GM12878 (cell line): ENCODE measurements at regions of chr7 and their contacts with region 1.

Region 1: DNA sequence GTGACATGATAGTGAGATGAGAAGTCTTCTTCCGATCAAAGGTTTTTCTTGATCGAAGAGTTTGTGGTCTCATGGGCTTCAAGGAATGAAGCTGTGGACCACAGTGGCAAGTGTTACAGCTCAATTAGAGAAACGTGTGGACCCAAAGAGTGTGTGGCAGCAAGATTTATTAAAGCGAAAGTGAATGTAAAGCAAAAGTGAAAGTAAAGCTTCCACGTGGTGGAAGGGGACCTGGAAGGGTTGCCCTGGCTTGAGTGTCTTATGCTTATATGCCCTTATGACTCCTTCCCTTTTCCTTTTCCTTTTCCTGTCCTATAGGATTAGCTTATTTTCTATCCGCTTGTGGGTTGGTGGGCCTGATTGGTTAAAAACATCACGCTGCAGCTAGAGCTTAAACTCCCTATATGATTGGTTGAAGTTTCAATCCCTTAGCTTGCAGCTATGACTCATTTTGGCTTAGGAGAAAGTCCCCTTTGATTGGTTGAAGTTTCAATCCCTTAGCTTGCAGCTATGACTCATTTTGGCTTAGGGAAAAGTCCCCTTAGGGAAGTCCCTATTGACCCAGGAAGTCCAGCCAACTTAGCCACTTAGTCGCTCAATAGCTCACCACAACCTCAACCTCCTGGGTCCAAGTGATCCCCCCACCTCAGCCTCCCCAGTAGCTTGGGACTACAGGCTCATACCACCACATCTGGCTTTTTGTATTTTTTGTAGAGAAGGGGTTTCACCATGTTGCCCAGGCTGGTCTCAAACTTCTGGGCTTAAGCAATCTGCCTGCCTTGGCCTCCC is 34.7 kb downstream of the MRPS24 start:
- DNase-seq: peak; percentile 73
- ATAC-seq: peak; percentile 81
- H3K4me3 ChIP-seq: peak overlapping the region; percentile 52
- H3K27ac ChIP-seq: peak overlapping the region; percentile 69
- H3K4me1 ChIP-seq: peaks cover 4% of the 10 kb centered on the region; the same call in 1 of the 2 replicates
- H3K27me3 ChIP-seq: no peaks in the 10 kb centered on the region
- CTCF ChIP-seq: no peak
- EP300 ChIP-seq: peak in 1 of 2 experiments; percentile 6; a peak in 1 of 4 replicates
- POLR2A ChIP-seq: no peak
- RAD21 ChIP-seq: no peak

Region 2: GRCh38 chr7:42940985-42941847 is 893.4 kb before region 1 on chr7:
- CTCF ChIA-PET with region 1: interaction called, 8 read pairs
- POLR2A ChIA-PET with region 1: no interaction called
- RAD21 ChIA-PET with region 1: interaction called, 10 read pairs
- SMC1A ChIA-PET with region 1: interaction called, 3 read pairs
- in situ Hi-C with region 1: loop called (anchors 10 kb)
- intact Hi-C with region 1: loop called (anchors 2 kb)
- DNase-seq: peak; percentile 48
- ATAC-seq: peak; percentile 66
- H3K4me3 ChIP-seq: no peak overlapping the region
- H3K27ac ChIP-seq: no peak overlapping the region
- H3K4me1 ChIP-seq: peaks cover 12% of the 10 kb centered on the region; the same call in 1 of the 2 replicates
- H3K27me3 ChIP-seq: no peaks in the 10 kb centered on the region
- CTCF ChIP-seq: peak; percentile 87 to 92 (median 91)
- EP300 ChIP-seq: no peak
- POLR2A ChIP-seq: no peak
- RAD21 ChIP-seq: peak; percentile 97

Region 3: DNA sequence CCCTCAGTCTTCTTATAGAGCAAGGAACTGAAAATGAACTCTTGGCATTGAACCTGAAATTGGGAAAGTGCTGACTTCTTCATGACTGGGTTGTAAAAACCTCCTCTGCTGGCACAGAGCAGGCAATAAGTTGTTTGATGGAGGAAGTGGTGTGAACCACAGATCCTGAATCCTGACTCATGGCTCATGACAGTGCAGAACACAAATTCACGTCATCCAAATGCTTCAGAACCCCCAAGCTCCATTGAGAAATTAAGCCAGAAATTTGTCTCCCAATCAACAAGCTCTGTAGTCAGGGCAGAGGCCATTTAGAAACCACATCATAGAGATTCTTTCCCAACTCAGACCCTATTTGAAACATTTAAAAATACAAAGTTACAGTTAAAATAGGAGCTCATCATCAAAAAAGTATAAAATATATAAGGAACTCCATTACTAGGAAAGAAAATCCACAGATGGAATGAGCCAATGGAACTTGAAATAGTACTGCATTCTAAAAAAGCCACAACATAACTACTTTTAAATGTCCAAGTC is 262.1 kb before region 1 on chr7:
- CTCF ChIA-PET with region 1: interaction called, 214 read pairs
- POLR2A ChIA-PET with region 1: interaction called, 4 read pairs
- RAD21 ChIA-PET with region 1: no interaction called
- SMC1A ChIA-PET with region 1: interaction called, 6 read pairs
- in situ Hi-C with region 1: no loop called
- intact Hi-C with region 1: no loop called
- DNase-seq: no peak
- ATAC-seq: peak; percentile 65
- H3K4me3 ChIP-seq: no peak overlapping the region
- H3K27ac ChIP-seq: peak overlapping the region; percentile 18; the same call in 1 of the 2 replicates
- H3K4me1 ChIP-seq: peaks cover 33% of the 10 kb centered on the region
- H3K27me3 ChIP-seq: no peaks in the 10 kb centered on the region
- CTCF ChIP-seq: no peak
- EP300 ChIP-seq: no peak; a peak in 1 of 4 replicates
- POLR2A ChIP-seq: no peak
- RAD21 ChIP-seq: no peak

Region 4: GRCh38 chr7:43700059-43700501 is 134.6 kb before region 1 on chr7:
- CTCF ChIA-PET with region 1: interaction called, 122 read pairs
- POLR2A ChIA-PET with region 1: interaction called, 6 read pairs
- RAD21 ChIA-PET with region 1: interaction called, 40 read pairs
- SMC1A ChIA-PET with region 1: interaction called, 50 read pairs
- in situ Hi-C with region 1: no loop called
- intact Hi-C with region 1: loop called (anchors 1 kb)
- DNase-seq: no peak
- ATAC-seq: peak; percentile 66
- H3K4me3 ChIP-seq: no peak overlapping the region
- H3K27ac ChIP-seq: no peak overlapping the region
- H3K4me1 ChIP-seq: peaks cover 43% of the 10 kb centered on the region
- H3K27me3 ChIP-seq: no peaks in the 10 kb centered on the region
- CTCF ChIP-seq: peak; percentile 40 to 77 (median 50); a peak in 5 of 6 replicates
- EP300 ChIP-seq: no peak
- POLR2A ChIP-seq: no peak
- RAD21 ChIP-seq: peak; percentile 96

Region 5: DNA sequence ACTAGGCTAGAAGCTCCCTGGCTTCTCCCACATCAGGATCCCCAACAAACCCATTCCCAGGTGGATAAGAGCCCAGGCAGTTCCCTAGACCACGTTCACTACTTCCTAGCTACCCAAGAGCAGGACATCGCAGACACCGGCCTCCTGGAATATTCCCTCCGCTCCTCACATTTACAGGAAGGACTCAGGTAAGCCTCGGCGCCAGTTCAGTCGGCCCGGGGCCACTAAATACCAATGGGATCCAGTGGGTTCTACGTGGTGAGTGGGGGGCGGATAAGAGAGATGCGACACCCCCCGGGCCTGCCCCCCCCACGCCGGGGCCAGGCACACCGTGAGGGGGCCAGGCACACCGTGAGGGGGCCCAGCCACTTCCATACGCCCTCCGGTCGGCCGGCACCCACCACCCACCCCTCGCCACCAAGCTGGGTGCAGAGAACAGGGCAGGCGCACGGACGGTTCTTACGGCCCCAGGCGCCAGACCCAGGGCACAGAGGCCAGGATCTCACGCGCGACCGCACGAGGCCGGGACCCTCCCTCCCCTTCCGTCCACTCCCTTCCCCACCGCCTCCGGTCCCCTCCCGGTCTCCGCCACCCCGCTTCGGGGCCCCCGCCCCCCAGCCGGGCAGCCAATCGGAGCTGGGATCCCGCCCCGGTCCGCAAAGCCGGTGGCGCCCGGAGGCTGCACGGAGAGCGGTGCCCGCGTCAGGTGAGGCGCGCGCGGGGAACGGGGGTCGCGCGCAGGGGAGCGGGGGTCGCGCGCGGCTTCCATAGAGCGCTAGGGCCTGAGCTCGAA is 76.4 kb before region 1 on chr7 and contains the start of gene BLVRA:
- CTCF ChIA-PET with region 1: interaction called, 7 read pairs
- POLR2A ChIA-PET with region 1: interaction called, 4 read pairs
- RAD21 ChIA-PET with region 1: interaction called, 10 read pairs
- SMC1A ChIA-PET with region 1: interaction called, 6 read pairs
- in situ Hi-C with region 1: no loop called
- intact Hi-C with region 1: loop called (anchors 2 kb)
- DNase-seq: no peak
- ATAC-seq: peak; percentile 82
- H3K4me3 ChIP-seq: peak within 1 kb of the TSS; percentile 87
- H3K27ac ChIP-seq: peak within 1 kb of the TSS; percentile 73
- H3K4me1 ChIP-seq: peaks cover 38% of the 10 kb centered on the region
- H3K27me3 ChIP-seq: no peaks in the 10 kb centered on the region
- CTCF ChIP-seq: no peak
- EP300 ChIP-seq: no peak
- POLR2A ChIP-seq: peak; percentile 70
- RAD21 ChIP-seq: no peak
- polyA plus RNA-seq, gene BLVRA: 187 to 198 TPM

Region 6: DNA sequence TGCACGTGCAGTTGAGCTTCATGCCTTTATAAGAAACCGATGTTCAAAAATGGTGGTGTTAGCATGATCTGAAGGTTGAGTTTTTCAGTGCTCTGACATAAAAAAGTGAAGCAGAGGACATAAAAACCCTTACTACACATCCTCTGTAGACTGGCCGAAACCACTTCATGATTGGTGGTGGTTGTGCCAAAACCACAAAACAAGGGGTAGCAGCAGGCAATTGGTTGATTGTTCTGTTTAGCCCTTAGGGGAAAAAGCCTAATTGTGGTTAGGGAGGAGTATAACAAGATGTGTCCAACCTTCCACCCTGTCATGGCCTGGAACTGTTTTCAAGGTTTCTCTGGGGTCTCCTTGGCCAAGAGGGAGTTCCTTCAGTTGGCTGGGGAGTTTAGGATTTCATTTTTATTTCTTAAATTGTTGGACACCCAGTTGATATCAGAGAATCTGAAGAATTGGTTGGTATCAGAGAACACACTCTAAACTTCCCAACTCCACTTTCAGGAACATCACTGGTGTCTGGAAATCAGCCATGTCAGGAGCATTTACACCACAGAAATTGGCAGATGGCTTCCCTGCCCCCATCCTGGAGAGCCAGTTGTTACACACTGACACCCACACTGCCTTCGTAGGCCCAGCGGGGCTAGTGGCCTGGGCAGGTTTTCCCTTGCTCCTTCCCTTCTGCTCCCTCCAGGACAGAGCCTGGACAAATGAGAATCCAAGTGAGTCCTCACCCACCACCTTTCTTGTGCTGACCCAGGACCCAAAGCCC is 15.9 kb after region 1 on chr7:
- CTCF ChIA-PET with region 1: interaction called, 16 read pairs
- POLR2A ChIA-PET with region 1: no interaction called
- RAD21 ChIA-PET with region 1: interaction called, 11 read pairs
- SMC1A ChIA-PET with region 1: interaction called, 8 read pairs
- in situ Hi-C with region 1: no loop called
- intact Hi-C with region 1: no loop called
- DNase-seq: peak; percentile 45
- ATAC-seq: peak; percentile 96
- H3K4me3 ChIP-seq: no peak overlapping the region
- H3K27ac ChIP-seq: no peak overlapping the region
- H3K4me1 ChIP-seq: peaks cover 10% of the 10 kb centered on the region; the same call in 1 of the 2 replicates
- H3K27me3 ChIP-seq: no peaks in the 10 kb centered on the region
- CTCF ChIP-seq: no peak
- EP300 ChIP-seq: no peak
- POLR2A ChIP-seq: no peak
- RAD21 ChIP-seq: no peak

Region 7: GRCh38 chr7:44145969-44146911 is 311.6 kb after region 1 on chr7:
- CTCF ChIA-PET with region 1: no interaction called
- POLR2A ChIA-PET with region 1: no interaction called
- RAD21 ChIA-PET with region 1: no interaction called
- SMC1A ChIA-PET with region 1: no interaction called
- in situ Hi-C with region 1: no loop called
- intact Hi-C with region 1: no loop called
- DNase-seq: no peak
- ATAC-seq: peak; percentile 42
- H3K4me3 ChIP-seq: no peak overlapping the region
- H3K27ac ChIP-seq: no peak overlapping the region
- H3K4me1 ChIP-seq: peaks cover 5% of the 10 kb centered on the region
- H3K27me3 ChIP-seq: no peaks in the 10 kb centered on the region
- CTCF ChIP-seq: no peak
- EP300 ChIP-seq: no peak
- POLR2A ChIP-seq: no peak
- RAD21 ChIP-seq: no peak